ENCODE measurements at regions of chr2 and their contacts with region 1.

Region 1: DNA sequence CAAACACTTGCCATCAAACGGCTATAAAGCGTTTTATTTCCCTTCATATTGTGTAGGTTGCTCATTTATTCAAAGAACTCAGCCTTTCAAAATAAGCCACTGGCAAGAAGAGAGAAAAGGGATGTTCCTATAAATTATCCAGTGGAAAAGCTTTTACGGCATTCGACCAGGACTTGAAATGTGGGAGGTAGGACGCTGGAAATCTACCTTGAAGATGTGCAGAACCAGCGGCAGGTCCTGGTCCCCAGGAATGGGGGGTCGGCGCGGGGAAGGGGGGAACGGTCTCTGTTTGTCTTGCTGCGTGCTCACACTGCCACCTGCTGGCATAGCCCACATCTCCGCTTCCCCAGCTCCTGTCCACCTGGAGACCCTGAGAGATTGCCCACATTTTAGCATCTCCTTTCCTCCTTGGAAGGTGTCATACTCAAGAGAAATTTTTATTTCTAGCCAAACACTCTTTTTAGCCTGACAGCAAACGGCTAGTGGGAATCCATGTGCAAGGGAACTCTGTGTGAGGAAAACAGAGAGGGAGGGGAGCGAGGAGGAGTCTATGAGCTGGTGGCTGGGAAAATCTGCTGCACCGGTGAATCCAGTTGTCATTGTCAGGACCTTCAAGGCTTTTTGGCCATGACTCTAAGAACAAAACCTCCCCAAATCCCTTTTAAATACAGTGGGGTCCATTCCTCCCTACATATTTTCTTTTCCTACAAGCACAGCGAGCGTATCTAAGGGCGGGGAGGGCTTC is 349.0 kb upstream of the PKDCC start:
- DNase-seq: peak; percentile 42
- H3K4me3 ChIP-seq: peak overlapping the region; percentile 4
- H3K27ac ChIP-seq: no peak overlapping the region
- H3K4me1 ChIP-seq: no peaks in the 10 kb centered on the region
- H3K27me3 ChIP-seq: peaks cover 25% of the 10 kb centered on the region
- CTCF ChIP-seq: peak; percentile 91

Region 2: GRCh38 chr2:40448468-40449079 is 1250.3 kb before region 1 on chr2:
- CTCF ChIA-PET with region 1: interaction called, 4 read pairs
- POLR2A ChIA-PET with region 1: no interaction called
- intact Hi-C with region 1: loop called (anchors 5 kb)
- DNase-seq: peak; percentile 44
- H3K4me3 ChIP-seq: no peak overlapping the region
- H3K27ac ChIP-seq: no peak overlapping the region
- H3K4me1 ChIP-seq: no peaks in the 10 kb centered on the region
- H3K27me3 ChIP-seq: peaks cover 79% of the 10 kb centered on the region
- CTCF ChIP-seq: peak; percentile 70

Region 3: GRCh38 chr2:41414486-41415230 is 284.2 kb before region 1 on chr2:
- CTCF ChIA-PET with region 1: interaction called, 18 read pairs
- POLR2A ChIA-PET with region 1: no interaction called
- intact Hi-C with region 1: loop called (anchors 1 kb)
- DNase-seq: peak; percentile 74
- H3K4me3 ChIP-seq: no peak overlapping the region
- H3K27ac ChIP-seq: no peak overlapping the region
- H3K4me1 ChIP-seq: no peaks in the 10 kb centered on the region
- H3K27me3 ChIP-seq: peaks cover 18% of the 10 kb centered on the region
- CTCF ChIP-seq: peak; percentile 83

Measured in A673 (cell line).